Spleen (tissue), 13 donors: ENCODE measurements at regions of chr3 and their contacts with region 1.

Region 1: DNA sequence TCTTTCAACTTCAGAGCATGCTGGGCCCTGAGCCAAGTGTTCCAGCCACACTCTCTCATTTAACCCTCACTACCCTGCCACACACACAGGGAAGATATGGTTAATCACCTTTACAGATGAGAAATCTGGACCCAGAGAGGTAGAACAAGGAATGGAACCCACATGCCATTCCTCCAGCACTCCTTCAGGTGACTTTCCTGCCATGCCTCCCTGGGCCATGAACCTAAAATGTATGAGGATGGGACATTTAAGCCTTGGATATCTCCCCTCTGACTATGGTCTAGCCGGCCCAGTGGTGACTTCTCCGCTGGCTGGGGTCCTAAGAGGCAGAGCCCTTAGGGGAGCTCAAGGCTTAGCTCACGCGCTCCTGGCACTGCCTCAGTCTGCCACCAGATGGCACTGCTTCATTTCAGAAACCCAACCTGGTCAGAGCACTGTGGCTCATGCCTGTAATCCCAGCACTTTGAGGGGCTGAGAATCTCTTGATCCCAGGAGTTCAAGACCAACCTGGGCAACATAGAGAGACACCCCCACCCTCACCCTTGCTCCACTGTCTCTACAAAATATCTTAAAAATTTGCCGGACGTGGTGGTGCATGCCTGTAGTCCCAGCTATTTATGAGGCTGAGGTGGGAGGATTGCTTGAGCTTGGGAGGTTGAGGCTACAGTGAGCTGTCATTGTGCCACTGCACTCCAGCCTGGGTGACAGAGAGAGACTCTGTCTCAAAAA is 2.2 kb upstream of the DCAF1 start:
- DNase-seq: peak; percentile 92
- H3K4me3 ChIP-seq: no peak overlapping the region
- H3K27ac ChIP-seq: no peak overlapping the region
- H3K4me1 ChIP-seq: peaks cover 0 to 42% (median 27%) of the 10 kb centered on the region in 6 donors
- H3K27me3 ChIP-seq: no peaks in the 10 kb centered on the region
- CTCF ChIP-seq: peak; percentile 90 to 99 (median 96)
- POLR2A ChIP-seq: no peak

Region 2: DNA sequence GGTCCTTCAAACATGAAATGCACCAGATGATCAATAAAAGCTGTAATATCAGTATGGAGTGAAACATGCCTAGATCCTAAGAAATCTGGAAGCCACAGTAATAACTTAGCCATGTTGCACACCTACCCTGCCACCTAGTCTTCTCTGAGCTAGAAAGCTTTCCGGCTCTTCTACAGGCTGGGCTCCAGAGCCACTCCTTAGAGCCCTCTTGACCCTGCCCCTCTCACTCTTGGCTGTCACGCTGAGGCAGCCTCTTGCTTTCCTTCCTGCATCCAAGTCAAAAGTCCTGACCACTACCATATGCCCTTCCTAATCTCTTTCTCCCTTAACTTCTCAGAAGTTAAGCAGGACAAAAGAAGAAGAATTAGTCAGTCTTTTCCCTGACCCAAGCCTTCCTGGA is 93.2 kb before region 1 on chr3:
- intact Hi-C with region 1: no loop called
- DNase-seq: no peak
- H3K4me3 ChIP-seq: no peak overlapping the region
- H3K27ac ChIP-seq: no peak overlapping the region
- H3K4me1 ChIP-seq: no peaks in the 10 kb centered on the region
- H3K27me3 ChIP-seq: no peaks in the 10 kb centered on the region
- CTCF ChIP-seq: no peak
- POLR2A ChIP-seq: no peak

Region 3: GRCh38 chr3:51682079-51682478 is 180.1 kb after region 1 on chr3:
- intact Hi-C with region 1: loop called (anchors 5 kb)
- DNase-seq: peak; percentile 85
- H3K4me3 ChIP-seq: peak overlapping the region in 4 of 8 donors; percentile 10 to 46 (median 10)
- H3K27ac ChIP-seq: peak overlapping the region; percentile 41 to 84 (median 70)
- H3K4me1 ChIP-seq: peaks cover 61 to 100% (median 96%) of the 10 kb centered on the region in 6 donors
- H3K27me3 ChIP-seq: no peaks in the 10 kb centered on the region
- CTCF ChIP-seq: peak; percentile 85 to 99 (median 95)
- POLR2A ChIP-seq: no peak

Region 4: GRCh38 chr3:51799879-51800749 is 298.1 kb after region 1 on chr3:
- intact Hi-C with region 1: loop called (anchors 2 kb)
- DNase-seq: no peak
- H3K4me3 ChIP-seq: no peak overlapping the region
- H3K27ac ChIP-seq: no peak overlapping the region
- H3K4me1 ChIP-seq: no peaks in the 10 kb centered on the region
- H3K27me3 ChIP-seq: peaks cover 0 to 18% (median 6%) of the 10 kb centered on the region in 7 donors
- CTCF ChIP-seq: peak in 10 of 11 experiments; percentile 12 to 76 (median 71)
- POLR2A ChIP-seq: no peak